Left colon (tissue), 2 donors: ENCODE measurements at regions of chr3 and their contacts with region 1.

Region 1: GRCh38 chr3:43503067-43503728 is 118.6 kb downstream of the ANO10 start:
- DNase-seq: no peak
- ATAC-seq: peak; percentile 83

Region 2: GRCh38 chr3:42961633-42962032 is 541.6 kb before region 1 on chr3:
- intact Hi-C with region 1: loop called in 1 of 2 experiments (anchors 10 kb)
- DNase-seq: peak in 1 of 2 donors; percentile 34
- ATAC-seq: peak; percentile 66

Region 3: GRCh38 chr3:43162230-43163084 is 340.7 kb before region 1 on chr3:
- intact Hi-C with region 1: loop called in 1 of 2 experiments (anchors 10 kb)
- DNase-seq: no peak
- ATAC-seq: peak; percentile 68

Region 4: DNA sequence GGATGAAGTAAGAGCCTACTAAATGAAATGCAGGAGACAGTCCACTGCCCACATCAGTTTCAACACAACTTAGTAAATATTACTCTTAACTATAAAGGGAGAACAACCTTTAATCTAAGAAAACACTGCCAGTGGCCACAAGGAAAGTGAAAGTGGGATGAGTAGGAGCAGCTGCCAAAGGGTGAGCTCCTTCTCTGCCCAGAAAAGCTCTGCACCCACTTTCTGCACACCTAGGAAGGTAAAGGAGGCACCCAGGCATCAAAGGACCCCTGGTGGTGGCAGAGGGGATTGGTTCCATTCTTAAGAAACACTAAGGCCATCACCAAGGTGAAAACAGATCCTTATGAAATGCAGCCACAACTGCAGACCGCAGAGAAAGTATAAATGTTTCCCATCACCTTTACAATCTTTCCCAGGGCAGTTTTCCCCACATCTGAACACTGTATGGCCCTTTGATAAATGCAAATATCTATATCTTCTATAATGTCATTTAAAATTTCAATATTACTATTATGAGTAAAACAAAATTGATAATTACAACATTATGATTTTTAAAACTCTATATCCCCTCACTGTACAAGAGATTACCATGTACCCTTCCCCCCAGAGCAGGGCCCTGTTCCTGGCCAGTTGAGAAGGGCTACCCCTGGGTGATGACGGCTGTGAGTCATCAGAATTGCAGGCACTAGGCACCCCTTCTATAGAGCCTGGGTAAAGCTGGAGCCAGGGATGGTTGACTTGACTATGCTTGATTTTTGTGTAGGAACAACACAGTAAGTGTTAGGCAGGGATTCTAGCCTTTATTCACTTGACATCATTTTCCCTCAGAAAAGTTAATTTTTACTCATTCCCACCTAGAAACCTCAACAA is 124.9 kb before region 1 on chr3:
- intact Hi-C with region 1: no loop called
- DNase-seq: peak in 1 of 2 donors; percentile 65
- ATAC-seq: peak; percentile 67

Region 5: GRCh38 chr3:44468572-44469520 is 965.6 kb after region 1 on chr3:
- intact Hi-C with region 1: no loop called
- DNase-seq: no peak
- ATAC-seq: peak; percentile 30